Naive thymus-derived CD4-positive, alpha-beta T cell (primary cell): ENCODE measurements at regions of chr21 and their contacts with region 1.

Region 1: DNA sequence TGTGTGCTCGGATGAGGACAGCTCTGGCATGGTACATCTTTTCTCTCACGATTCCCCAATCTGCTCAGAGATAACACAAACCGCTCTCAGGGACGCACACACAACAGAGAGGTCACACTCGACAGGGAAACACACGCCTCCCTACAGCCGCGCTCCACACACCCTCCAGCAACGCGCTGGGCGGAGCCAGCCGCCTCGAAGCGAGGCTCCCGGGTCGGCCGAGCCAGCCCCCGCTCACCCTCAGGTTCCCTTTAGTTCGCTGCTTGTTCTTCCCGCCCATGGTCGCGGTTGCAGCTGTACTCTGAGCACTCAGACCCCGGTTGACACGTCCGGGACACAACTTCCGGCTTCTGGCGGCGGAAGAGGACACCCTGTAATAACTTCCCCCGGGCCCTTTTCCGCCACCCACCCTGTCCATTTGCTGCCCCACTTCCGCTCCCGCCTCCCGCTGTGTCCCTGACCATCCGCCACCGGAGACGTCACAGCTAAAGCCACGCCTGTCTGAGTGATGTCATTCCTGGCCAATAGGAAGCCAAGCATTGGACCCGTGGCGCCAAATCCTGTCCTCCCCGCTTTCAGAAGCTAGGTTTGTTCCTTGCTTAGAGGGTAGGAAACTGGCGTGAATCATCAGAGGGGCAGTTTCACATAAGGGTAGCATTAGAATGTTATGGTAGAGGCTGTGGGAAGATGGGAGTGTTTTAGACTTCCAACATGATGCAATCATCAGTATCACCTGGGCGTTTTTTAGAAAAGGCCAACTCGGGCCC is at the start of gene LTN1:
- DNase-seq: peak; percentile 91 to 99 (median 98)
- ATAC-seq: peak; percentile 98
- H3K4me3 ChIP-seq: peak within 1 kb of the TSS; percentile 86
- H3K4me3 Mint-ChIP-seq: peak within 1 kb of the TSS; percentile 89 to 99 (median 94)
- H3K27ac ChIP-seq: peak within 1 kb of the TSS; percentile 87
- H3K27ac Mint-ChIP-seq: peak within 1 kb of the TSS; percentile 94 to 99 (median 98)
- H3K4me1 ChIP-seq: peaks cover 11 to 23% of the 10 kb centered on the region in 2 donors
- H3K4me1 Mint-ChIP-seq: peaks cover 26 to 58% (median 42%) of the 10 kb centered on the region in 7 donors
- H3K27me3 ChIP-seq: no peaks in the 10 kb centered on the region
- H3K27me3 Mint-ChIP-seq: no peaks in the 10 kb centered on the region
- total RNA-seq, gene LTN1: 27.3 to 36.3 (median 31.3) TPM

Region 2: DNA sequence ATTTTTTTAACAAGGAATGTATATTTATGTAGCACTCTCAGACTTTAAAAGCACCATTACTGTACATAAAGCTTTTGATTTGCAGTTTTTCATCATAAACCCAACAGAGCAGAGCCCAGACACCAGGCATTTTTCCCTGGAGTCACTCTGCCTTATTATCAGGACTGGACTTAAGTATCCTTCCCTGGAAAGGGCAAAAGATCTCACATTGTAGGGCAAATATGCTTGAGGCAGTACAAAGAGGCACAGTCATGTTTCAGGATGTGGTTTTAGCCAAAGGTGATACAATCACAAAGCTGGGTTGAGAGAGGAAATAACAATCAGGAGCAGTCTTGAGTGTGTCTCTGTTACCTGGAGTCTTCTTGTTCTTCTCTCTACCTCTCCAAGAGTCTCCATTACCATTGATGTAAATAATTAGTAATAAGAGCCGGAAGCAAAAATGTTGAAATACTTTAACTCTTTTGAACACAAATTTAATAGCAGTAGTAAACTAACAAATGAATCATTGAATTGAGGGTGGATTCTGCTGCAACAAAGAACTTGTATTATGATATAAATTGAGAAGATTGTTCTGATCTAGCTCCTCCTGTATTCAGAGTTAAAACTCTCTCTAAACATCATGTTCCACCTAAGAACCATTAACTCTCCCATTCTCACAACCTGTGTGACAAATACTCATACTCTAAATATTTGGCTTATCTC is 160.5 kb before region 1 on chr21:
- CTCF ChIA-PET with region 1: no interaction called
- POLR2A ChIA-PET with region 1: interaction called, 3 read pairs
- intact Hi-C with region 1: loop called in 1 of 2 experiments (anchors 5 kb)
- DNase-seq: peak in 6 of 9 donors; percentile 29 to 64 (median 52)
- ATAC-seq: peak; percentile 91
- H3K4me3 ChIP-seq: peak overlapping the region; percentile 21
- H3K4me3 Mint-ChIP-seq: peak overlapping the region; percentile 12 to 75 (median 68)
- H3K27ac ChIP-seq: no peak overlapping the region
- H3K27ac Mint-ChIP-seq: peak overlapping the region; percentile 2 to 97 (median 68)
- H3K4me1 ChIP-seq: peaks cover 52 to 56% of the 10 kb centered on the region in 2 donors
- H3K4me1 Mint-ChIP-seq: peaks cover 46 to 82% (median 76%) of the 10 kb centered on the region in 7 donors
- H3K27me3 ChIP-seq: no peaks in the 10 kb centered on the region
- H3K27me3 Mint-ChIP-seq: no peaks in the 10 kb centered on the region

Region 3: GRCh38 chr21:28893687-28894086 is 99.0 kb before region 1 on chr21:
- CTCF ChIA-PET with region 1: no interaction called
- POLR2A ChIA-PET with region 1: no interaction called
- intact Hi-C with region 1: no loop called
- DNase-seq: no peak
- ATAC-seq: no peak
- H3K4me3 ChIP-seq: no peak overlapping the region
- H3K4me3 Mint-ChIP-seq: no peak overlapping the region
- H3K27ac ChIP-seq: no peak overlapping the region
- H3K27ac Mint-ChIP-seq: no peak overlapping the region
- H3K4me1 ChIP-seq: no peaks in the 10 kb centered on the region
- H3K4me1 Mint-ChIP-seq: no peaks in the 10 kb centered on the region
- H3K27me3 ChIP-seq: no peaks in the 10 kb centered on the region
- H3K27me3 Mint-ChIP-seq: peaks cover 4 to 56% (median 10%) of the 10 kb centered on the region in 5 donors

Region 4: DNA sequence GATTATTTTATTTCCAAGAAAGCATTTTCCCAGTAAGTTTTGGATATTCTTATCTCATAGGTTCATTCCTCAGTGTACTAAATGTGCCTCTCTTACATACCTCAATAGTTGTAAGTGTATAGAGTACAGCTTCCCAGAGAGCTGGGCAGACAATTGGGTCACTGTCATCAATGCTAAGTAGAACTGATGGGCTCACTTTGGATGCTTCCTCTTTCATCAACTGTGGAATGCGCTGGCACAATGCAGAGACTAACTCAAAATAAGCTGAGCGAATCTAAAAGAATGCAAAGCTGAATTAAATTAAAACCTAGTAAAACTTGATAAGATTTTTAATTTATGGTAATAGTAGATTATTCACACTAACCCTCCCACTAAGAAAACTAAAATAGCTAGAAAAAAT is 21.5 kb before region 1 on chr21:
- CTCF ChIA-PET with region 1: no interaction called
- POLR2A ChIA-PET with region 1: no interaction called
- intact Hi-C with region 1: no loop called
- DNase-seq: no peak
- ATAC-seq: no peak
- H3K4me3 ChIP-seq: no peak overlapping the region
- H3K4me3 Mint-ChIP-seq: no peak overlapping the region
- H3K27ac ChIP-seq: no peak overlapping the region
- H3K27ac Mint-ChIP-seq: no peak overlapping the region
- H3K4me1 ChIP-seq: no peaks in the 10 kb centered on the region
- H3K4me1 Mint-ChIP-seq: peaks cover 4 to 29% (median 8%) of the 10 kb centered on the region in 7 donors
- H3K27me3 ChIP-seq: no peaks in the 10 kb centered on the region
- H3K27me3 Mint-ChIP-seq: no peaks in the 10 kb centered on the region

Region 5: DNA sequence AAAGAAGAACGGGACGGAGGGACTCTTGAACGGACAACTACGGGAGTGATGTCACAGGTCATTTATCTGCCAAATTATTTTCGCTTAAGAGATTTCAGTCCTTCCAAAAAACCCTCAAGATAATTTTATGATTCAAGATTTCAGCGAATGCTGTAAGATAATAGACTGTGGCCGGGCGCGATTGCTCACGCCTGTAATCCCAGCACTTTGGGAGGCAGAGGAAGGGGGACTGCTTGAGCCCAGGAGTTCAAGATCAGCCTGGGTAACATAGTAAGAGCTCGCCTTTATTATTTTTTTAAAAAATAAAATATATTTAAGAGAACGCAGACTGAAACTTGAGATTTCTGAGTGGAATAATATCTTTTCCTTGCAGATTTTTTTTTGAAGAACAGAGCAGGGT is 25.8 kb after region 1 on chr21:
- CTCF ChIA-PET with region 1: no interaction called
- POLR2A ChIA-PET with region 1: interaction called, 408 read pairs
- intact Hi-C with region 1: loop called in 1 of 2 experiments (anchors 1 kb)
- DNase-seq: no peak
- ATAC-seq: no peak
- H3K4me3 ChIP-seq: peak overlapping the region; percentile 90
- H3K4me3 Mint-ChIP-seq: peak overlapping the region; percentile 73 to 94 (median 91)
- H3K27ac ChIP-seq: peak overlapping the region; percentile 87
- H3K27ac Mint-ChIP-seq: peak overlapping the region; percentile 71 to 94 (median 92)
- H3K4me1 ChIP-seq: peaks cover 33 to 34% of the 10 kb centered on the region in 2 donors
- H3K4me1 Mint-ChIP-seq: peaks cover 12 to 48% (median 29%) of the 10 kb centered on the region in 7 donors
- H3K27me3 ChIP-seq: no peaks in the 10 kb centered on the region
- H3K27me3 Mint-ChIP-seq: no peaks in the 10 kb centered on the region

Region 6: GRCh38 chr21:29024474-29025327 is 32.0 kb after region 1 on chr21 and contains the start of gene USP16:
- CTCF ChIA-PET with region 1: no interaction called
- POLR2A ChIA-PET with region 1: interaction called, 408 read pairs
- intact Hi-C with region 1: loop called (anchors 1 kb)
- DNase-seq: peak; percentile 86 to 97 (median 96)
- ATAC-seq: peak; percentile 94
- H3K4me3 ChIP-seq: peak within 1 kb of the TSS; percentile 88
- H3K4me3 Mint-ChIP-seq: peak within 1 kb of the TSS; percentile 88 to 99 (median 96)
- H3K27ac ChIP-seq: peak within 1 kb of the TSS; percentile 93
- H3K27ac Mint-ChIP-seq: peak within 1 kb of the TSS; percentile 97 to 100 (median 99)
- H3K4me1 ChIP-seq: peaks cover 35 to 41% of the 10 kb centered on the region in 2 donors
- H3K4me1 Mint-ChIP-seq: peaks cover 21 to 79% (median 53%) of the 10 kb centered on the region in 7 donors
- H3K27me3 ChIP-seq: no peaks in the 10 kb centered on the region
- H3K27me3 Mint-ChIP-seq: no peaks in the 10 kb centered on the region
- total RNA-seq, gene USP16: 40.9 to 84.3 (median 62.7) TPM

Region 7: GRCh38 chr21:29033871-29034270 is 41.2 kb after region 1 on chr21:
- CTCF ChIA-PET with region 1: no interaction called
- POLR2A ChIA-PET with region 1: interaction called, 408 read pairs
- intact Hi-C with region 1: no loop called
- DNase-seq: no peak
- ATAC-seq: no peak
- H3K4me3 ChIP-seq: no peak overlapping the region
- H3K4me3 Mint-ChIP-seq: no peak overlapping the region
- H3K27ac ChIP-seq: no peak overlapping the region
- H3K27ac Mint-ChIP-seq: peak overlapping the region in 4 of 9 donors; percentile 0 to 55 (median 32)
- H3K4me1 ChIP-seq: peaks cover 0 to 5% of the 10 kb centered on the region in 2 donors
- H3K4me1 Mint-ChIP-seq: peaks cover 5 to 30% (median 25%) of the 10 kb centered on the region in 7 donors
- H3K27me3 ChIP-seq: no peaks in the 10 kb centered on the region
- H3K27me3 Mint-ChIP-seq: no peaks in the 10 kb centered on the region

Region 8: DNA sequence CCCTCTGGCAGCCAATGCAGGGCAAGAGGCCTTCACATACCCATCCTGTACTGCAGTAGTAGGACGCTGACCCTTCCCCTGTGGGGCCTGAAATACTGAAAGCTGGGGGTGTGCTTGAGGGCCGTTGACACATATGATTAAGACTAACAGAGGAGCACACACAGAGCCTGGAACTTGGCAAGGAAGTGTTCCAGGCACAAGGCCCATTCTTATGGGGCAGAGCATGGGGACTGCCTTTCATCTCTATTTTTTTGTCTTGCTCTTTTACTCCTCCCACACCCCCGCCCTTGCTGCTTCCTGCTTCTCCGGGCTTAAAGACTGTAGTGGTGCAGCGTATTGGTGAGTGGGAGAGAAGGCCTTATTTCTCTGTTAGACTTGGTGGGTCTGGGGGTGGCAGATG is 443.4 kb after region 1 on chr21:
- CTCF ChIA-PET with region 1: no interaction called
- POLR2A ChIA-PET with region 1: no interaction called
- intact Hi-C with region 1: no loop called
- DNase-seq: peak in 8 of 9 donors; percentile 28 to 69 (median 54)
- ATAC-seq: peak; percentile 90
- H3K4me3 ChIP-seq: peak overlapping the region; percentile 41
- H3K4me3 Mint-ChIP-seq: peak overlapping the region; percentile 80 to 91 (median 88)
- H3K27ac ChIP-seq: peak overlapping the region; percentile 63
- H3K27ac Mint-ChIP-seq: peak overlapping the region; percentile 81 to 98 (median 94)
- H3K4me1 ChIP-seq: peaks cover 10 to 17% of the 10 kb centered on the region in 2 donors
- H3K4me1 Mint-ChIP-seq: peaks cover 12 to 55% (median 34%) of the 10 kb centered on the region in 7 donors
- H3K27me3 ChIP-seq: no peaks in the 10 kb centered on the region
- H3K27me3 Mint-ChIP-seq: no peaks in the 10 kb centered on the region